Head of caudate nucleus (tissue), 42 donors: ENCODE measurements at regions of chr1 and their contacts with region 1.

Region 1: GRCh38 chr1:145927063-145927886 is at the start of gene RBM8A:
- DNase-seq: peak; percentile 81 to 98 (median 95)

Region 2: DNA sequence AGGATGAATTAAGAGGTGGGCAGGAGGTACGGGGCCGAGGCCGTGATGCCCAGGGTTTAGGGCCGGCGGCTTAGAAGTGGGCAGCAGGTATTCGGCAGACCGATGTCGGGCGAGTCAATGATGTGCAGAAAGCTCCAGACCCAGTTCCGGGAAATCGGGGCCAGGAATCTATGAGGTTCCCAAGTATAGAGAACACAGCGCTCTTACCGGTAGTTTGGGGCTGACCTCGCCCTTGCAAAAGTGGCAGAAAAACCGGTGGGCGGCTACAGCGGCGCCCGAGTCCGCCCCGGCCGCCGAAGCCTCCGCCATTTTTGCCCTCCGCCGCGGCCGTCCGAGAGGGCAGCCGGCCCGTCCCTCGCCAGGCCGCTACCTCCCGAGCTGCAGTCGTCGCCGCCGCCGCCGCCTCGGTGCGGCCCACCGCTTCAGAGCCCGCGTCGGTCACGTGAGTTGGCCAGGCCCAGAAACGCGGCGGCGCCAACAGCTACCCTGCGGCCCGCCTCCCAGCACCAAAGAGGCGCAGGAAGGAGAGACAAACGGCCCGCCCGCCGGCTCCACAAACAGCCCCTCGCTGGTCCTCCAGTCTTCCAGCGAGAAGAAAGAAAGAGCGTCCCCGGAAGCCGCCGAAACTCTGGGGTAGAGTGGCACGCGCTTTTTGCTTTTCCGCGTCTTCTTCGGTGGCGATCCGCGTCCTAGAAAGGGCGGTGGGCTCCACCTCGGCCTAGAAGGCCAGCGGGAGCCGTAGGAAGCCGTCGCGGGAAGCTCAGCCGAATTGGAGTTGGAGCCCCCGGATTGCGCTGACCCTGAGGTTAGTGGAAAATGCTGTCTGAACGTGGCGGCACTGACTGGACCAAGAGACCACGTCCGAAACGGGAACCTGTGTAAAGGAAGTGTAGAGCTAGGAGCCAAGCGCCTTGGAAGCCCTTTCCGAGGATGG is 103.4 kb before region 1 on chr1 and contains the starts of genes POLR3C and RNF115:
- intact Hi-C with region 1: no loop called
- DNase-seq: peak; percentile 75 to 97 (median 92)

Region 3: GRCh38 chr1:145957443-145958319 is 30.4 kb after region 1 on chr1 and contains the start of gene LIX1L:
- intact Hi-C with region 1: loop called (anchors 2 kb)
- DNase-seq: peak; percentile 93 to 99 (median 98)

Region 4: GRCh38 chr1:146012737-146013403 is 85.6 kb after region 1 on chr1:
- intact Hi-C with region 1: no loop called
- DNase-seq: peak in 22 of 42 donors; percentile 35 to 79 (median 58)